Heart right ventricle (tissue), 16 donors: ENCODE measurements at regions of chr12 and their contacts with region 1.

Region 1: GRCh38 chr12:116015525-116015924 is 262.0 kb downstream of the MED13L start:
- DNase-seq: no peak
- ATAC-seq: peak in 7 of 8 donors; percentile 47 to 88 (median 81)
- H3K4me3 ChIP-seq: no peak overlapping the region
- H3K27ac ChIP-seq: no peak overlapping the region
- H3K4me1 ChIP-seq: peaks cover 0 to 39% (median 11%) of the 10 kb centered on the region in 9 donors
- H3K27me3 ChIP-seq: no peaks in the 10 kb centered on the region
- CTCF ChIP-seq: peak; percentile 20 to 82 (median 60)

Region 2: GRCh38 chr12:116135209-116135930 is 119.8 kb after region 1 on chr12:
- intact Hi-C with region 1: loop called in 4 of 10 experiments (anchors 5 to 10 kb)
- DNase-seq: peak in 1 of 2 donors; percentile 27
- ATAC-seq: peak in 5 of 8 donors; percentile 15 to 52 (median 23)
- H3K4me3 ChIP-seq: no peak overlapping the region
- H3K27ac ChIP-seq: peak overlapping the region in 2 of 10 donors; percentile 15 to 18
- H3K4me1 ChIP-seq: peaks cover 0 to 91% (median 70%) of the 10 kb centered on the region in 9 donors
- H3K27me3 ChIP-seq: no peaks in the 10 kb centered on the region
- CTCF ChIP-seq: no peak

Region 3: DNA sequence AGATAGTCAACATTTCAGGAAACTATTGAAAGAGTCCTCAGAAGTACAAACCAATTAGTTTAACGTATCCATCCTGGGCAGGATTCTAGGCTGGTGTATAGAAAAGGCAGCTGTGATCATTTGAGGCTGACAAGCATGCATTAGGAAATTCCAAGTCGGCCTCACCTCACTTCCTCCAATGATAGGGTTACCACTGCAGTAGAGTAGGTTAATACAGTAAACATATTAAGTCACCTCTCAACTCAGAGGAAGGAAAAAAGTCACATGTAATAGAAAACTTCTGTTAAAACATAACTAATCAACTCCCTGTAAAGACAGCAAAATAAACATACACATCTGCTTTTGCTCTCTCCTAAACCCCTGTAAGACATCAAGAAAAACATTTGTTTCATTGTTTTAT is 228.5 kb after region 1 on chr12:
- intact Hi-C with region 1: loop called in 4 of 10 experiments (anchors 5 to 10 kb)
- DNase-seq: no peak
- ATAC-seq: peak in 4 of 8 donors; percentile 22 to 41 (median 38)
- H3K4me3 ChIP-seq: no peak overlapping the region
- H3K27ac ChIP-seq: peak overlapping the region in 1 of 10 donors; percentile 28
- H3K4me1 ChIP-seq: peaks cover 7 to 89% (median 77%) of the 10 kb centered on the region in 9 donors
- H3K27me3 ChIP-seq: no peaks in the 10 kb centered on the region
- CTCF ChIP-seq: no peak